ENCODE measurements at regions of chr19 and their contacts with region 1.

Region 1: DNA sequence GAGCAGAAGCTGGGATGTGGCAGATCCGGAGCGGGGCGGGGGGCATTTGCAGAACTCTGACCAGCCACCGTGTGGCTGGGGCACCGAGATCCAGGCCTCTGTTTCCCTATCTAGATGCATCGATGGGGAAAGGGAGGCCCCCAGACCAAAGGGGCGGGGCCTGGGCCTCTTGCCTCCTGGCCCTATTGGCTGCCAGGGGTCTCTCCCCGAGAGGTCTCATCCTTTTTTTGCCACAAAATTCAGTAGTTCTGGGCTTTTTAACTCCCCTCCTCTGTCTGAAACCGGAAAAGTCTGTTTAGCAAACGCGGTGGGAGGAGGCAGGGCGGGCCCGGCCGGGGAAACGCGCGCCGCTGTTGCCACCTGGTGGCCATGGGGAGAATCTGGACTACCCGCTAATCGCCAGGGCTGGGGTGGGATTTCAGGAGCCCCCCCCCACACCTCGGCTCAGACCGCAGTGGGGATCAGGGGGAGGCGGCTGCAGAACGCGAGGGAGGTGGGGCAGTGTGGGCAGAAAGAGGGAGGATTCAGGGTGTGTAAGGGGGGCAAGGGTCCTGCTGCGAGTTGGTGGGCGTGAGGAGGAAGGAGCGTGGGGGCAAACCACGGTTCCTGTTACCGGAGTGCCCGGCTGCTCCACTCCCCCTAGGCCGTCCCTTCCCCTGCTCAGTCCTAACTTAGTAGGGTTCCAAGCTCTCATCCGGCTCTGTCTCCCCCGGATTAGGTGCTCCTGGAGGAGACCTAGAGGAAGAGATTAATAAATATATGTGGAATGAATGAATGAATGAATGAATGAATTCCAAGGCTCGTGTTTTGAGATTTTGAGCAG is 28.3 kb downstream of the IL12RB1 start:
- DNase-seq: peak; percentile 91
- ATAC-seq: peak; percentile 92
- H3K4me3 Mint-ChIP-seq: no peak overlapping the region
- H3K27ac Mint-ChIP-seq: peak overlapping the region; percentile 74
- H3K4me1 Mint-ChIP-seq: peaks cover 9% of the 10 kb centered on the region
- H3K27me3 Mint-ChIP-seq: no peaks in the 10 kb centered on the region

Region 2: GRCh38 chr19:17794731-17795536 is 263.5 kb before region 1 on chr19 and contains the start of gene B3GNT3:
- CTCF ChIA-PET with region 1: no interaction called
- POLR2A ChIA-PET with region 1: no interaction called
- intact Hi-C with region 1: no loop called
- DNase-seq: peak; percentile 56
- ATAC-seq: no peak
- H3K4me3 Mint-ChIP-seq: peak within 1 kb of the TSS; percentile 60
- H3K27ac Mint-ChIP-seq: peak within 1 kb of the TSS; percentile 19
- H3K4me1 Mint-ChIP-seq: peaks cover 57% of the 10 kb centered on the region
- H3K27me3 Mint-ChIP-seq: no peaks in the 10 kb centered on the region
- total RNA-seq, gene B3GNT3: 0.75 to 0.95 TPM

Region 3: DNA sequence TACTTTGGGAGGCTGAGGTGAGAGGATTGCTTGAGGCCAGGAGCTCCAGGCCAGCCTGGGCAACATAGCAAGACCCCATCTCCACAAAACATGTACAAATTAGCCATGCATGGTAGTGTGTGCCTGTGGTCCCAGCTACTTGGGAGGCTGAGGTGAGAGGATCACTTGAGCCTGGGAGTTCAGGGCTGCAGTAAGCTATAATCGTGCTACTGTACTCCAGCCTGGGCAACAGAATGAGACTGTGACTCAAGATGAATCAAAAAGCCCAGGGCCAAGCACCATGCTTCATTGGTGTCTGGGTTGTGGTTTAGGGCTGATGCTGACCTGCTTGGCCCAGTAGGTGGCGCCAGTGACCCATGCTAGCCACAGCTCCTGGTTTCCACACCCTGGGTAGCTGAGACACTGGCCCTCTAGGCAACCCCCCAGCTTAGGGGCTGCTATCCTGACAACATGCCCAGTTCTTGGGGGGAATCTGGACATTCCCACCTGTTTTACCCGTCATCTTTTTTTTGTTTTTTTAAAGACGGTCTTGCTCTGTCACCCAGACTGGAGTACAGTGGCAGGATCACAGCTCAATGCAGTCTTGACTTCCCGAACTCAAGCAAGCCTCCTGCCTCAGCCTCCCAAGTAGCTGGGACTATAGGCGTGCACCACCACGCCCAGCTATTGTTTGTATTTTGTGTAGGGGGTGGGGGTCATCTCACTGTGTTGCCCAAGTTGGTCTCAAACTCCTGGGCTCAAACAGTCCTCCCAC is 120.2 kb before region 1 on chr19:
- CTCF ChIA-PET with region 1: interaction called, 5 read pairs
- POLR2A ChIA-PET with region 1: no interaction called
- intact Hi-C with region 1: loop called in 1 of 2 experiments (anchors 2 kb)
- DNase-seq: peak; percentile 92
- ATAC-seq: peak; percentile 98
- H3K4me3 Mint-ChIP-seq: no peak overlapping the region
- H3K27ac Mint-ChIP-seq: no peak overlapping the region
- H3K4me1 Mint-ChIP-seq: peaks cover 6% of the 10 kb centered on the region
- H3K27me3 Mint-ChIP-seq: no peaks in the 10 kb centered on the region

Region 4: DNA sequence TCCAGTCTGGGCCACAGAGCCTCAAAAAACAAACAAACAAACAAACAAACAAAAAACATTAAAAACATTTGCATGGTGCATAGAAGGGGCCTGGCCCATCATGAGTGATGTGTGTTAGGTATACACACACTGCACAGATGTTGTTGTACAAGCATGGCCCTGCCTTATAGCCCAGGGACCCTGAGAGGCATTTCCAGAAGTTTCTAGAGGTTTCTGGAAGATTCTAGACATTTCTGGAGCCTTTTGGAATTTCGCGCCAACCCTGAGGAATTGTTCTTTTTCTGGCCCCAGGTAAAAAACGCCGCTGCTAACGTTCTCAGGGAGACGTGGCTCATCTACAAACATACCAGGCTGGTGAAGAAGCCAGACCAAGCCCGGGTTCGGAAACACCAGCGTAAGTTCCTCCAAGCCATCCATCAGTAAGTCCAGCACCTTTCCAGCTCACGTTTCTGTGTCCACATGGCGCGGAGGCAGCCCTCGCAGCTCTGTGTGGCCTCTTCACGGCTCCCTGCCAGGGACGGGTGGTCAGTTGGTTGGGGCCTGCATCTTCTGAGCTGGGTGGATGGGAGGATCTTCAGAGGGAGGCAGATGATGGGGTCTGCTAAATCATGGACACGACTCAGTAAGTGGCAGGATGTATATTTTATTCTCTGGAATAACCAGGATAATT is 68.9 kb before region 1 on chr19:
- CTCF ChIA-PET with region 1: no interaction called
- POLR2A ChIA-PET with region 1: no interaction called
- intact Hi-C with region 1: no loop called
- DNase-seq: no peak
- ATAC-seq: no peak
- H3K4me3 Mint-ChIP-seq: no peak overlapping the region
- H3K27ac Mint-ChIP-seq: no peak overlapping the region
- H3K4me1 Mint-ChIP-seq: no peaks in the 10 kb centered on the region
- H3K27me3 Mint-ChIP-seq: no peaks in the 10 kb centered on the region

Region 5: DNA sequence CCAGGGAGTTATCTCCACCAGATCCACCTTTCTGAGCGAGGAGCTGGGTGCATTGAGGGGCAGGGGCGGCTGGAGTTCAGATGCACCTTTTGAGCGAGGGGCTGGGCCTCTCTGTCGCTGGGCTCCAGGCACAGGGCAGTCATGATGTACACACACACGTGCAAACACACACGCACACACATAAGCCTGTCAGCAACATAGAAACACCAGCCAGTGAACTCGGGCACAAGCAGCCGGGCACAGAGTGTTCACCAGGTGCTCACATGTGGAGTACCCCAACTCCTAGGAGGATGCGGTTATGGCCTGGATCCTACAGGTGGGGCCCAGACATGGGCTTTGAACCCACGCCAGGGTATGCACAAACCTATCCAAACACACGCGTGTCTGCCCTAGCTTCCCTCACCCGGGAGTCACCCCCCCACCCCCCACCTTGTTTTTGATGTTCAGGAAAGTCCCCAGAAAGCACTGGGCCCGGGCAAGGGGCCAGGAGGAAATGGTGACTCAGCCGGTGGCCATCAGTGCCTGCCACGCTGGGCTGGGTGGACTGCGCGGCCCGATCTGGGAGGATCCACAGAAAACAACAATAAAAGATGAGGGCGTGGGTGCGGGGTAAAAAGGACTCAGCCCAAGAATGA is 37.2 kb before region 1 on chr19:
- CTCF ChIA-PET with region 1: interaction called, 4 read pairs
- POLR2A ChIA-PET with region 1: no interaction called
- intact Hi-C with region 1: loop called in 1 of 2 experiments (anchors 5 kb)
- DNase-seq: peak; percentile 80
- ATAC-seq: peak; percentile 31
- H3K4me3 Mint-ChIP-seq: peak overlapping the region; percentile 70
- H3K27ac Mint-ChIP-seq: peak overlapping the region; percentile 90
- H3K4me1 Mint-ChIP-seq: peaks cover 60% of the 10 kb centered on the region
- H3K27me3 Mint-ChIP-seq: no peaks in the 10 kb centered on the region

Region 6: GRCh38 chr19:18167975-18168645 is 109.7 kb after region 1 on chr19:
- CTCF ChIA-PET with region 1: no interaction called
- POLR2A ChIA-PET with region 1: no interaction called
- intact Hi-C with region 1: loop called in 1 of 2 experiments (anchors 1 kb)
- DNase-seq: peak; percentile 81
- ATAC-seq: peak; percentile 95
- H3K4me3 Mint-ChIP-seq: no peak overlapping the region
- H3K27ac Mint-ChIP-seq: no peak overlapping the region
- H3K4me1 Mint-ChIP-seq: peaks cover 4% of the 10 kb centered on the region
- H3K27me3 Mint-ChIP-seq: no peaks in the 10 kb centered on the region

Region 7: DNA sequence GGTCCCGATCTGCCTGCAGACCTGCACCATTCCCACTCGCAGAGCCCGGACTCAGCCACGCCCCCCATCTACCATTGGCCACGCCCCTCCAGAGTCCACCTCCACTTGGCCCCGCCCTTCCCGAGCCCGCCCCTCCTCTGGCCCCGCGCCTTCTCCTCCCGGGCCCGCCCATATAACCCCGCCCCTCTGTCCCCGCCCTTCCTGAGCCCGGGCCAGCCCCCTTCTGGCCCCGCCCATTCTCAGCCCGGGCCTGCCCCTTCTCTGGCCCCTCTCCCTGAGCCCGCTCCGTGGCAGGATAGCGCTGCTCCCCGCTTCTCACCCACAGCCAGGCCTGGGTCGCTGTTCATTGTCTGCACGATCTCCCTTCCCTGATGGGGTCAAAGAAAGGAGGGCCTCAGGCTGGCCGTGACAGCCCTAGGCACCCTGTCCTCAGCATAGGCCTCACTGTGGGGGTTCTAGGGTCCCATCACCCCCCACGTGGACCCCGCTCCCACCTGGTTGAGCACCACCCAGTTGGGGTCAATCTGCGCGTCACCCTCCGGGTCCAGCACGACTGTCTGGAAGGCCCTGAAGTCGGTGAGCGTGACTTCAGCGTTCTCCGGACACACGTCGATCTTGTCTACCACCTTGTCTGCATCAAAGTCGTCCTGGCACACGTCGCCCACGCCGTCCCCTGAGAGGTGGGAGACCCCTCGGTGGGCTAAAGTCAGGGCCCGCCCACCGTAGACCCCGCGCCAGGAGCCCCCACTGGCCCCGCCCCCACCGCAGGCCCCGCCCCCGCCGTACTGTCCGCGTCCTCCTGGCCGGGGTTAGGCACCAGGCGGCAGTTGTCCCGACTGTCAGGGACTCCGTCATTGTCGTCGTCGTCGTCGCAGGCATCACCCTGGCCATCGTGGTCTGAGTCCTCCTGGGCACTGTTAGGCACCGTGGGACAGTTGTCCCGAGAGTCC is 727.0 kb after region 1 on chr19:
- CTCF ChIA-PET with region 1: no interaction called
- POLR2A ChIA-PET with region 1: no interaction called
- intact Hi-C with region 1: no loop called
- DNase-seq: peak; percentile 90
- ATAC-seq: peak; percentile 88
- H3K4me3 Mint-ChIP-seq: no peak overlapping the region
- H3K27ac Mint-ChIP-seq: no peak overlapping the region
- H3K4me1 Mint-ChIP-seq: peaks cover 31% of the 10 kb centered on the region
- H3K27me3 Mint-ChIP-seq: peaks cover 46% of the 10 kb centered on the region

Measured in activated CD4-positive, alpha-beta T cell treated with anti-CD3 and anti-CD28 coated beads for 36 hours (primary cell).